MCF 10A (cell line): ENCODE measurements at regions of chr22 and their contacts with region 1.

Region 1: GRCh38 chr22:19730655-19731360 is 7.5 kb downstream of the GP1BB start:
- DNase-seq: peak; percentile 76
- H3K4me3 Mint-ChIP-seq: peak overlapping the region; percentile 70
- H3K27ac Mint-ChIP-seq: no peak overlapping the region
- H3K4me1 Mint-ChIP-seq: no peaks in the 10 kb centered on the region
- H3K27me3 Mint-ChIP-seq: no peaks in the 10 kb centered on the region
- CTCF ChIP-seq: peak; percentile 97

Region 2: DNA sequence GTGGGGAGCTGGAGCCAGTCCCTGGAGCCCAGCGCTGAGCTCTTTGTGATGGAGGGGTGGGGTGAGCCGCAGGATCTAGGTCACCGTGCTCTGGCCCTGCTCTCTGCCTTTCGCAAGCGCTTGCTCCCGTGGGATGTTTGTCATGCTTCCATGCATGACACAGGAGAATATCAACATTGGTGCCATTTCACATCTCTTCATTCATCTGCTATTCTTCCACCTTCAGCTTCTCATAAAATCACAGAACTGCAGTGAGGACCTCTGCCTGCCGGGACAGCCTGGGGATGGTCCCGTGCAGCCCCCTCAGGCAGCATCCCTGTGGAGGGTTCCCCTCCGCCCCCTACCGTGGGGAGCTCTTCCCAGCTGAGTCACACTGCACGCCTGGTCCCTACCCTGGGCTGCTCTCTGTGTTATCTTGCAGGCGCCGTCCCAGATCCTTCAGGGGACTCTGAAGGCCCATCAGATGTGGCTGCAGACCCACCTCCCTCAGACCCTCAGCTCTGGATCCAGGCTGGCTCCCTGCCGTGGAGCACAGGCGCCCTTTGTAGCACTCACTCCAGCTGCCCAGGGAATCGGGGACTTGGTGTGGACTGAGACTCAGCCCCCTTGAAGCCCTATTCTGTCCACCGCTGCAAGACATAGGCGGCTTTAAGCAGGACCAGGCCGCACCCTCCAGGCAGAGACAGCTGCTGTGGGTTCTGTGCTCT is 21.6 kb before region 1 on chr22:
- CTCF ChIA-PET with region 1: interaction called, 15 read pairs
- POLR2A ChIA-PET with region 1: no interaction called
- intact Hi-C with region 1: no loop called
- DNase-seq: no peak
- H3K4me3 Mint-ChIP-seq: no peak overlapping the region
- H3K27ac Mint-ChIP-seq: no peak overlapping the region
- H3K4me1 Mint-ChIP-seq: no peaks in the 10 kb centered on the region
- H3K27me3 Mint-ChIP-seq: no peaks in the 10 kb centered on the region
- CTCF ChIP-seq: no peak

Region 3: GRCh38 chr22:19891317-19892256 is 160.8 kb after region 1 on chr22:
- CTCF ChIA-PET with region 1: interaction called, 11 read pairs
- POLR2A ChIA-PET with region 1: no interaction called
- intact Hi-C with region 1: no loop called
- DNase-seq: peak; percentile 84
- H3K4me3 Mint-ChIP-seq: no peak overlapping the region
- H3K27ac Mint-ChIP-seq: peak overlapping the region; percentile 70
- H3K4me1 Mint-ChIP-seq: peaks cover 23% of the 10 kb centered on the region
- H3K27me3 Mint-ChIP-seq: no peaks in the 10 kb centered on the region
- CTCF ChIP-seq: no peak

Region 4: GRCh38 chr22:19902245-19902715 is 171.5 kb after region 1 on chr22:
- CTCF ChIA-PET with region 1: interaction called, 19 read pairs
- POLR2A ChIA-PET with region 1: no interaction called
- intact Hi-C with region 1: no loop called
- DNase-seq: no peak
- H3K4me3 Mint-ChIP-seq: no peak overlapping the region
- H3K27ac Mint-ChIP-seq: no peak overlapping the region
- H3K4me1 Mint-ChIP-seq: no peaks in the 10 kb centered on the region
- H3K27me3 Mint-ChIP-seq: no peaks in the 10 kb centered on the region
- CTCF ChIP-seq: no peak

Region 5: GRCh38 chr22:19941365-19942082 is 210.7 kb after region 1 on chr22 and contains the starts of genes COMT and TXNRD2:
- CTCF ChIA-PET with region 1: interaction called, 11 read pairs
- POLR2A ChIA-PET with region 1: interaction called, 3 read pairs
- intact Hi-C with region 1: no loop called
- DNase-seq: peak; percentile 62
- H3K4me3 Mint-ChIP-seq: peak within 1 kb of the TSS; percentile 89
- H3K27ac Mint-ChIP-seq: peak within 1 kb of the TSS; percentile 97
- H3K4me1 Mint-ChIP-seq: peaks cover 27% of the 10 kb centered on the region
- H3K27me3 Mint-ChIP-seq: no peaks in the 10 kb centered on the region
- CTCF ChIP-seq: no peak
- total RNA-seq, gene COMT: 196 and 208 TPM in 2 replicates
- total RNA-seq, gene TXNRD2: 28.7 and 39.9 TPM in 2 replicates